ENCODE measurements at regions of chr2 and their contacts with region 1.

Region 1: DNA sequence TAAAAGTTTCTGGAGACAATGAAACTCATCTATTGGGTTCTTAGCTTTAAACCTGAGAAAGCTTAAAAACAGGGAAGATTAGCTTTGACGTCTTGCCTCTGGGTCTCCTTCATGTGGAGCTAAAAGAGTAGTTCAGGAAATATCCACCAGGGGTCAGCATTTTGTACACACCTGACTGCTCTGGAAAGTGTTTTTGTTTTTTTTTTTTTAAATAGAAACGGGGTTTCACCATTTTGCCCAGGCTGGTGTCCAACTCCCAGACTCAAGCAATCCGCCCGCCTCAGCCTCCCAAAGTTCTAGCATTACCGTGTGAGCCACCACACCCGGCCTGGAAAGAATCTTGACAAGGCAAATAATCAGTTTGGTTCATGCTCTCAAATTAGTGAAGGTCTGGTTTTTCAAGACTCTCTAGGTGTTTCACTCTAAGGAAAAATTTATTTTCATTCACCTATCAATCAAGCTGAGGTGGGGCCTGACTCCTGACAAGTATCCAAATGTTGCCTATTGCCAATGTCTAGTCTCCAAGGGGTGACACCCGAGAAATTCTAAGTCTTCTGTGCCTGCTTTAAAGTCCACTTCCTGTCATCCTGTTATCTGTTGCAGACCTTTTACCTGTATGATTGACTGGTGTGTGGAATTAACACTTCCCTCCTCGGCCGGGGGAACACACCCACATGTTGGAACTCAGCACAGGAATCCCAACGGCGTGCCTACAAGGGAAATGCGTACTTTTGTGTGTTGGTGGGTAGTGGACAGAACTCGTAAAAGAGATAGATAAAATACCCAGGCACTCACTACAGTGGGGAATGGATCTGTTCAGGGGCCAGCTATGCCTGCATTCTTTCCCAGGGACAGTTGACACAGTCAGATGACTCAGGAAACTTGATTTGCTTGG is 11.3 kb downstream of the IL1RN start:
- DNase-seq: peak in 7 of 9 donors; percentile 67 to 82 (median 79)
- ATAC-seq: peak; percentile 89
- H3K4me3 ChIP-seq: peak overlapping the region; percentile 10
- H3K4me3 Mint-ChIP-seq: peak overlapping the region; percentile 37 to 81 (median 64)
- H3K27ac ChIP-seq: peak overlapping the region; percentile 54
- H3K27ac Mint-ChIP-seq: peak overlapping the region in 8 of 9 donors; percentile 36 to 87 (median 68)
- H3K4me1 ChIP-seq: peaks cover 0 to 8% of the 10 kb centered on the region in 2 donors
- H3K4me1 Mint-ChIP-seq: peaks cover 17 to 32% (median 23%) of the 10 kb centered on the region in 7 donors
- H3K27me3 ChIP-seq: no peaks in the 10 kb centered on the region
- H3K27me3 Mint-ChIP-seq: no peaks in the 10 kb centered on the region

Region 2: DNA sequence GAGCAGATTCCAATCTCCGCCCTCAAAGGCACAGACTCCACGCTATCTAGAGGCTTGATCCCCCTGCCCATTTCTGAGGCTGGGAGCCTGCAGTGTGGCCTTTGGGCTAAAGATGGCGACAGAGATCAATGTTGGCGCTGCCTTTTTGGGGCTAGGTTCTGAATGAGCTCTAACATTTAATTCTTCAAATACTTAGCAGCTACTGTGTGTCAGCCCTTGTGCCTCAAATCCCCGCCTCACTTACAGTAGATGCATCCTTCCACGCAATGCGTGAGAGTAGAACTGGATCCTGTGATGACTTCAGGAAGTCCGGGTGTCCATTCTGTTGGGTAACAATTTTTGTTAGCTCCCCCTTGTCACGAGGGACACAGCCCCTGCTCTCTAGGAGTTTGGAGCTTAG is 58.5 kb before region 1 on chr2:
- CTCF ChIA-PET with region 1: interaction called, 7 read pairs
- POLR2A ChIA-PET with region 1: no interaction called
- intact Hi-C with region 1: loop called (anchors 1 kb)
- DNase-seq: peak in 7 of 9 donors; percentile 26 to 55 (median 35)
- ATAC-seq: peak; percentile 69
- H3K4me3 ChIP-seq: no peak overlapping the region
- H3K4me3 Mint-ChIP-seq: no peak overlapping the region
- H3K27ac ChIP-seq: no peak overlapping the region
- H3K27ac Mint-ChIP-seq: no peak overlapping the region
- H3K4me1 ChIP-seq: no peaks in the 10 kb centered on the region
- H3K4me1 Mint-ChIP-seq: peaks cover 2 to 13% (median 4%) of the 10 kb centered on the region in 7 donors
- H3K27me3 ChIP-seq: no peaks in the 10 kb centered on the region
- H3K27me3 Mint-ChIP-seq: peaks cover 0 to 7% (median 0%) of the 10 kb centered on the region in 5 donors

Region 3: DNA sequence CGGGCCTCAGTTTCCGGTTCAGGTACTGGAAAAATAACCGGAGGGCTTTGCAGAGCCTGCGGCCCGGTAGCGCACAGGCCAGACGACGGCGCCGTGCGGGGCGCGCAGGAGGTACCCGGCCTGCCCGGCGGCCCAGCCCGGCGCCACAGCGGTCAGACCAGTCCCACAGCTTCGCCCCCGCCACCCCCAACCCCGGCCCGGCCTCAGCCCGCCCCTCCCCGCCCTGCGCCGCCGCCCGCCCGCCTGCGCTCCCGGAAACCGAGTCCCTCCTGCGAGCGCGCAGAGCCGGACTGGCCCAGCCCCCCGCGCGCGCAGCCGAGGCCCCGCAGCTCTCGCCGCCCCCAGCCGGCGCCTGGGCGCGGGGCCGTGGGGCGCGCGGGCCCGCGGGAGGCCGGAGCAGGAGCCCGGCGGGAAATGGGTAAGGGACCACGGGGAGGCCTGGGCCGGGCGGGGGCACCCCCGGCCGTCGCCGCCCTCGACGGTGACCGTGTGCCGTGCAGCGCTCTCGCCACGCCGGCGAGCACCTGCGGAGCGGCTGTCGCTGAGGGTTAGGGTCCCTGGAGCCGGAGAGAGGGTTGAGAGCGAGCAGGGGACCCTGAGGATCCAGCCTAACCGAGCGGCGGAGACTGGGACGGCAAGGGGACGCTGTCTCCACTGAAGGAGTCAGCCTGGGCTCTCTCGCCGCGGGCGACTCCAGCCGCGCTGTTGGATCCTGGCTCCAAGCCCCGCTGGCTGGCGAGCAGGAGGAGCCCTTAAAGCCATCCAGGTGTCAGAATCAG is 18.6 kb after region 1 on chr2:
- CTCF ChIA-PET with region 1: interaction called, 34 read pairs
- POLR2A ChIA-PET with region 1: interaction called, 8 read pairs
- intact Hi-C with region 1: loop called (anchors 1 to 2 kb)
- DNase-seq: peak in 8 of 9 donors; percentile 39 to 67 (median 53)
- ATAC-seq: peak; percentile 90
- H3K4me3 ChIP-seq: peak overlapping the region; percentile 81
- H3K4me3 Mint-ChIP-seq: peak overlapping the region; percentile 84 to 94 (median 90)
- H3K27ac ChIP-seq: peak overlapping the region; percentile 74
- H3K27ac Mint-ChIP-seq: peak overlapping the region; percentile 77 to 93 (median 88)
- H3K4me1 ChIP-seq: peaks cover 14 to 20% of the 10 kb centered on the region in 2 donors
- H3K4me1 Mint-ChIP-seq: peaks cover 12 to 34% (median 28%) of the 10 kb centered on the region in 7 donors
- H3K27me3 ChIP-seq: no peaks in the 10 kb centered on the region
- H3K27me3 Mint-ChIP-seq: peaks cover 0 to 11% (median 0%) of the 10 kb centered on the region in 5 donors

Region 4: GRCh38 chr2:113173542-113174395 is 35.1 kb after region 1 on chr2 and contains the start of gene PSD4:
- CTCF ChIA-PET with region 1: interaction called, 80 read pairs
- POLR2A ChIA-PET with region 1: interaction called, 28 read pairs
- intact Hi-C with region 1: loop called (anchors 1 kb)
- DNase-seq: peak; percentile 61 to 92 (median 90)
- ATAC-seq: peak; percentile 88
- H3K4me3 ChIP-seq: peak within 1 kb of the TSS; percentile 80
- H3K4me3 Mint-ChIP-seq: peak within 1 kb of the TSS; percentile 87 to 99 (median 94)
- H3K27ac ChIP-seq: peak within 1 kb of the TSS; percentile 92
- H3K27ac Mint-ChIP-seq: peak within 1 kb of the TSS; percentile 89 to 98 (median 93)
- H3K4me1 ChIP-seq: peaks cover 67 to 68% of the 10 kb centered on the region in 2 donors
- H3K4me1 Mint-ChIP-seq: peaks cover 58 to 84% (median 72%) of the 10 kb centered on the region in 7 donors
- H3K27me3 ChIP-seq: no peaks in the 10 kb centered on the region
- H3K27me3 Mint-ChIP-seq: peaks cover 0 to 5% (median 0%) of the 10 kb centered on the region in 5 donors
- total RNA-seq, gene PSD4: 96.4 to 399 (median 167) TPM

Region 5: GRCh38 chr2:113198790-113199612 is 60.3 kb after region 1 on chr2:
- CTCF ChIA-PET with region 1: interaction called, 356 read pairs
- POLR2A ChIA-PET with region 1: interaction called, 9 read pairs
- intact Hi-C with region 1: loop called (anchors 1 kb)
- DNase-seq: peak; percentile 57 to 86 (median 70)
- ATAC-seq: peak; percentile 88
- H3K4me3 ChIP-seq: no peak overlapping the region
- H3K4me3 Mint-ChIP-seq: no peak overlapping the region
- H3K27ac ChIP-seq: peak overlapping the region; percentile 44
- H3K27ac Mint-ChIP-seq: peak overlapping the region in 5 of 9 donors; percentile 36 to 75 (median 62)
- H3K4me1 ChIP-seq: peaks cover under 1 to 7% of the 10 kb centered on the region in 2 donors
- H3K4me1 Mint-ChIP-seq: peaks cover 3 to 54% (median 9%) of the 10 kb centered on the region in 7 donors
- H3K27me3 ChIP-seq: no peaks in the 10 kb centered on the region
- H3K27me3 Mint-ChIP-seq: no peaks in the 10 kb centered on the region

Region 6: DNA sequence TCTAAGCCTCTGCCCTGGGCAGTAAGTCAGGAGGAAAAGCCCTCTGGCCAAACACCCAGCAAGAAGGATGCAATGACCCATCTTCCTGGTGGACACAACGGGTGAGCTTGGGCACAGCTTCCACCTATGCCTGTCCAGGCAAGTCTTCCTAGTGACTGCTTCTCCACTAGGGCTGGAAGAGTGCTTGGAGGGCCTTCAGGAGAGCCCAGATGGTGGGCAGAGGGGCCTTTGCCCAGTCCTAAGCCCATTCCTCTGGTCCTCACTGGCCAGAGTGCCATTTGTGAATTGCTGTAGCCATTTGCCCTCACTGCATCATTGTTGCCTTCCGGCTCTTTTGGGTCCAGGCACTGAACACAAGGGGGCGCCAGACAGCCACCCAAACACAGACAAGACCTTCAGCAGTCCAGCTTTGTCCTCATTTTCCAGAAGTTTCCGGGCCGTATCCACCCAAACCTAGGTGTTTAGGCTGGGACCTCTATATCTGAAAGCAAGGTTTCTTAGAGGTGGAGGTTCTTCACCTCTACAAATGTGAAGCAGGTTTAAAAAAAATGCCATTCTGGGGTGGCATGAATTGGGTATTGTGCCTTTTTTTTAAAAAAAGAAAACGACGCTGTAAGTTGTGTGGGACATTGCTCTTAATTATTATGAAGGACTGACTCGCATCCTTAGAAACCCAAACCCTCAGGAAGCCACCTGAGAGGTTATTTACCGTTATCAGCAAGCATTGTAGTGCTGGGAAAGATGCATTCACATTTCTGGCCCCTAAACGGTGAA is 110.5 kb after region 1 on chr2:
- CTCF ChIA-PET with region 1: interaction called, 6 read pairs
- POLR2A ChIA-PET with region 1: interaction called, 4 read pairs
- intact Hi-C with region 1: loop called (anchors 1 to 5 kb)
- DNase-seq: peak; percentile 53 to 84 (median 71)
- ATAC-seq: peak; percentile 81
- H3K4me3 ChIP-seq: no peak overlapping the region
- H3K4me3 Mint-ChIP-seq: peak overlapping the region in 5 of 10 donors; percentile 3 to 63 (median 33)
- H3K27ac ChIP-seq: peak overlapping the region; percentile 6
- H3K27ac Mint-ChIP-seq: peak overlapping the region; percentile 43 to 94 (median 87)
- H3K4me1 ChIP-seq: peaks cover 40 to 46% of the 10 kb centered on the region in 2 donors
- H3K4me1 Mint-ChIP-seq: peaks cover 32 to 58% (median 51%) of the 10 kb centered on the region in 7 donors
- H3K27me3 ChIP-seq: no peaks in the 10 kb centered on the region
- H3K27me3 Mint-ChIP-seq: no peaks in the 10 kb centered on the region

Region 7: GRCh38 chr2:113390124-113390849 is 251.6 kb after region 1 on chr2:
- CTCF ChIA-PET with region 1: interaction called, 11 read pairs
- POLR2A ChIA-PET with region 1: no interaction called
- intact Hi-C with region 1: loop called (anchors 5 kb)
- DNase-seq: peak in 8 of 9 donors; percentile 28 to 85 (median 82)
- ATAC-seq: peak; percentile 99
- H3K4me3 ChIP-seq: peak overlapping the region; percentile 73
- H3K4me3 Mint-ChIP-seq: peak overlapping the region; percentile 57 to 89 (median 77)
- H3K27ac ChIP-seq: no peak overlapping the region
- H3K27ac Mint-ChIP-seq: peak overlapping the region; percentile 22 to 84 (median 68)
- H3K4me1 ChIP-seq: no peaks in the 10 kb centered on the region
- H3K4me1 Mint-ChIP-seq: peaks cover 9 to 20% (median 16%) of the 10 kb centered on the region in 7 donors
- H3K27me3 ChIP-seq: no peaks in the 10 kb centered on the region
- H3K27me3 Mint-ChIP-seq: peaks cover 6 to 38% (median 11%) of the 10 kb centered on the region in 5 donors

Measured in naive thymus-derived CD4-positive, alpha-beta T cell (primary cell).